GM12878 (cell line): ENCODE measurements at regions of chr14 and their contacts with region 1.

Region 1: GRCh38 chr14:66507722-66508546 is at the start of gene GPHN:
- DNase-seq: peak; percentile 95
- ATAC-seq: peak; percentile 91
- H3K4me3 ChIP-seq: peak within 1 kb of the TSS; percentile 95
- H3K27ac ChIP-seq: peak within 1 kb of the TSS; percentile 87
- H3K4me1 ChIP-seq: peaks cover 4% of the 10 kb centered on the region
- H3K27me3 ChIP-seq: no peaks in the 10 kb centered on the region
- CTCF ChIP-seq: peak; percentile 15 to 23 (median 20); a peak in 4 of 6 replicates
- EP300 ChIP-seq: 0 out of 4 replicates have a peak, but pooled peaks of 1 of the 2 experiments have one; percentile 13
- POLR2A ChIP-seq: peak; percentile 95
- RAD21 ChIP-seq: no peak
- polyA plus RNA-seq, gene GPHN: 32.3 to 33.1 TPM

Region 2: DNA sequence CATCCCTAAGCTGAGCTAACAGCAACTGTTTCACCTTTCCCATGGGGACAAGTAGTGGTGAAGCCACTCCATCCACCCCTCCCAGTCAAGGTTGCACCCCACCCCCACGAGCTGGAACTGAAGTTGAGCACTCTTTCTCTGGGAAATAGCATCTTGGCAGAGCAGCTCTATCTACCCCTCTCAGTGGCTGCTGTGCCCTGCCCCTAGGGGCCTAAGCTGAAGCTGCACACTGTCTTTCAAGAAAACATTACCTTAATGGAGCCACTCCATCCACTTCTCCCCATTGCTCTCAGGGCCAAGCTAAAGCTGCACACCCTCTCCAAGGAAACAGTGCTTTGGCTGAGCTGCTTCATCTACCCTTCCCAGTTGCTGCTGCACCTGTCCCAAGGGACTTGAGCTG is 192.4 kb before region 1 on chr14:
- CTCF ChIA-PET with region 1: no interaction called
- POLR2A ChIA-PET with region 1: no interaction called
- RAD21 ChIA-PET with region 1: no interaction called
- SMC1A ChIA-PET with region 1: no interaction called
- in situ Hi-C with region 1: no loop called
- intact Hi-C with region 1: no loop called
- DNase-seq: no peak
- ATAC-seq: no peak
- H3K4me3 ChIP-seq: no peak overlapping the region
- H3K27ac ChIP-seq: no peak overlapping the region
- H3K4me1 ChIP-seq: no peaks in the 10 kb centered on the region
- H3K27me3 ChIP-seq: no peaks in the 10 kb centered on the region
- CTCF ChIP-seq: 0 out of 6 replicates have a peak, but pooled peaks of 1 of the 3 experiments have one; percentile 15
- EP300 ChIP-seq: no peak
- POLR2A ChIP-seq: no peak
- RAD21 ChIP-seq: no peak

Region 3: DNA sequence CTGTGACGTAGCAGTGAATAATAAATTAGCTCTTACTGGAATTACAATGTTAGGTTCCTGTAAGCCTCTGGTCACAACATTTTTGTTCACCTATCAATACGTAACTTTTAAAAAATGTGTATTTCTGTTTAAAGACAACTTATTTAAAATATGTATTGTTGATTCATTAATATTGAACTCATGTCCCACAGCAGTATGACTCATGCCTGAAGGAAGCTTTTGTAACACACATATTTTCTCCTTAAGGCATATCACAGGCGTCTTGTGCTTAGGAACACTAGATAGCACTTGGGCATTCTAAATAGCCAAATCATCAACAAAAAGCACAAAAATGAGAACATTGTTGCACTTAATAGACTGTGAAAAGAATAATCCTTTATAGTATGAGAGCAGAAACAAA is 92.5 kb after region 1 on chr14:
- CTCF ChIA-PET with region 1: no interaction called
- POLR2A ChIA-PET with region 1: no interaction called
- RAD21 ChIA-PET with region 1: no interaction called
- SMC1A ChIA-PET with region 1: interaction called, 3 read pairs
- in situ Hi-C with region 1: no loop called
- intact Hi-C with region 1: loop called (anchors 5 kb)
- DNase-seq: no peak
- ATAC-seq: no peak
- H3K4me3 ChIP-seq: no peak overlapping the region
- H3K27ac ChIP-seq: no peak overlapping the region
- H3K4me1 ChIP-seq: peaks cover 7% of the 10 kb centered on the region; the same call in 1 of the 2 replicates
- H3K27me3 ChIP-seq: no peaks in the 10 kb centered on the region
- CTCF ChIP-seq: no peak
- EP300 ChIP-seq: no peak
- POLR2A ChIP-seq: no peak
- RAD21 ChIP-seq: no peak

Region 4: DNA sequence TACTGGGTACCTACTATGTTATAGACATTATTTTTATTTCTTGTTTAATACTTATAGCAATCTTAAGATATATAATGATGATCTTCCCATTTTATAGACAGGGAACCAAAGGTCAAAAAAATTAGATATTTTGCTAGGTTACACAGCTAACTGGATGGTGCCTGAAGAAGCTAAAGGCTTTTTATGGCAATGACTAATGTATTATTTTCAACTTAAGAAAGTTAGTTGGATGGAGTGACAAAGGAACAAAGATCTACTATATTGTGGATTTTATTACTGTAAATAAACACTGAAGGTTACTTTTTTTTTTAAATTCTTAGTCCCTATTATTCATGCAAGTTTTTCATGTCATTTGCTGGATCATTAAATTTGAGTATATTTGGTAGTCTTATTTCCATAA is 227.9 kb after region 1 on chr14:
- CTCF ChIA-PET with region 1: no interaction called
- POLR2A ChIA-PET with region 1: no interaction called
- RAD21 ChIA-PET with region 1: no interaction called
- SMC1A ChIA-PET with region 1: no interaction called
- in situ Hi-C with region 1: no loop called
- intact Hi-C with region 1: no loop called
- DNase-seq: no peak
- ATAC-seq: no peak
- H3K4me3 ChIP-seq: no peak overlapping the region
- H3K27ac ChIP-seq: no peak overlapping the region
- H3K4me1 ChIP-seq: no peaks in the 10 kb centered on the region
- H3K27me3 ChIP-seq: no peaks in the 10 kb centered on the region
- CTCF ChIP-seq: no peak
- EP300 ChIP-seq: no peak
- POLR2A ChIP-seq: no peak
- RAD21 ChIP-seq: no peak

Region 5: GRCh38 chr14:66881596-66881995 is 373.7 kb after region 1 on chr14:
- CTCF ChIA-PET with region 1: no interaction called
- POLR2A ChIA-PET with region 1: no interaction called
- RAD21 ChIA-PET with region 1: no interaction called
- SMC1A ChIA-PET with region 1: no interaction called
- in situ Hi-C with region 1: no loop called
- intact Hi-C with region 1: no loop called
- DNase-seq: no peak
- ATAC-seq: no peak
- H3K4me3 ChIP-seq: no peak overlapping the region
- H3K27ac ChIP-seq: no peak overlapping the region
- H3K4me1 ChIP-seq: no peaks in the 10 kb centered on the region
- H3K27me3 ChIP-seq: no peaks in the 10 kb centered on the region
- CTCF ChIP-seq: no peak
- EP300 ChIP-seq: no peak
- POLR2A ChIP-seq: no peak
- RAD21 ChIP-seq: no peak

Region 6: DNA sequence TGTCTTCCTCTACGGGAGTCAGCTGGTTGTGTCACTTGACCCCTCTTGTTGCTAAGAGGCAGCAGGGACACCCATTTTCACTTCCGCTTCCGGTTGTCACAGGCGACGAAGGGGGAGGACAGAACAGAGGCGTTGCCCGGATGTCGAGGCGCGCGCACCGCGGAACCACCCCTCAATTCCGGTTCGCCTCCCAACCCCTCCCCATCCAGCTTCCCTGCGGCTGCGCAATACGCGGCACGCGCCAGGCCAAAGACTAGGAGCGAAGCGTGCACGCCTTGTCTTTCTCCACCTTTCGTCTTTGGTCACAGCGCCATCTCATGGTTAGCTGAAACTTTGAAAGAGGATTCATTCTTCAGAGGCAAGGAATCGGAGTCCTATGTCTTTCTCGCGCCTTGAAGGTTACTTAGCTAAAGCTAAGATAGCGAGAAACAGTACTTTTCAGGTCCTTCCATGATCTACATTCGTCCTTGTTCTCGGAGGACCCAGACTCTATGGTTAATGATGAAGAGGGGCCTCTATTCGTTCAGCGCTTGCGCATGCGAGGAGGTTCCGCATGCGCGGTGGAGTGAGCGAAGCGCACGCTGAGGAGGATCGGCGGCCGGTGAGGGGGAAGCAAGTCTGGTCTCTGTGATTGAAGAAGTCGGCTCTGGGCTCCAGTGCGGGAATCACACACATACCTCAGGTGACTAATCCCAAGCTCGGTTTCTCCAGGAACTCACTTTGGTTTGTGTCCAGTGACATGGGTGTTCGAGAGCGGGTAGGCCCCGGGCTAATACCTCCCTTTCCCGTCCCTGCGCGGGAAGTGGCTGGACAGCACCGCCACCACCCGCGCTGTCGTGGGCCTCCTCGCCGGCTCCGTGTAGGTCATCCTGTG is 852.1 kb after region 1 on chr14 and contains the starts of genes ATP6V1D and EIF2S1:
- CTCF ChIA-PET with region 1: no interaction called
- POLR2A ChIA-PET with region 1: interaction called, 3 read pairs
- RAD21 ChIA-PET with region 1: interaction called, 3 read pairs
- SMC1A ChIA-PET with region 1: no interaction called
- in situ Hi-C with region 1: loop called (anchors 10 kb)
- intact Hi-C with region 1: no loop called
- DNase-seq: peak; percentile 98
- ATAC-seq: peak; percentile 91
- H3K4me3 ChIP-seq: peak within 1 kb of the TSS; percentile 91
- H3K27ac ChIP-seq: peak within 1 kb of the TSS; percentile 98
- H3K4me1 ChIP-seq: peaks cover 4% of the 10 kb centered on the region; the same call in 1 of the 2 replicates
- H3K27me3 ChIP-seq: no peaks in the 10 kb centered on the region
- CTCF ChIP-seq: peak; percentile 94 to 100 (median 96); a peak in 5 of 6 replicates
- EP300 ChIP-seq: no peak
- POLR2A ChIP-seq: peak; percentile 88
- RAD21 ChIP-seq: peak; percentile 35
- polyA plus RNA-seq, gene ATP6V1D: 49.9 to 71.6 TPM
- polyA plus RNA-seq, gene EIF2S1: 526 to 563 TPM